Psoas muscle (tissue), 8 donors: ENCODE measurements at regions of chr1 and their contacts with region 1.

Region 1: DNA sequence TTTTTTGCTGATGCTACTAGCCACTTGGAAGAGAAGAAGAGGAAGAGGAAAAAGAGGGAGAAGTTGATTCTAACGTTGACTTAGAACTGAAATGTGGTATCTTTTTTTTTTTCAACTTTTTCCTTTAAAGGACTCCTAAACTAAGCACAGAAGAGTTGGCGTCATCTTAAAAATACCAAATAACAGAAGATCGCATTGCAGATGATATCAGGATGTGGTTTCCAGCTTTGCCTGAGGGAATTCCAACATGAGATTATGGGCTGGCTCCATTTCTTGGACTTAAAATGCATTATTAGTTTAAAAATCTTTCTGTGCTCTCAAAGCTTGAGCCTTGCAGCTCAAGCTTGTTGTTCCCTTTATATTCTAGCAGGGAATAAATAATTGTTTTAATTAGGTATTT is 29.8 kb downstream of the WDR3 start:
- DNase-seq: no peak
- ATAC-seq: no peak
- H3K4me3 ChIP-seq: no peak overlapping the region
- H3K27ac ChIP-seq: no peak overlapping the region
- H3K4me1 ChIP-seq: no peaks in the 10 kb centered on the region
- H3K27me3 ChIP-seq: no peaks in the 10 kb centered on the region
- CTCF ChIP-seq: no peak

Region 2: DNA sequence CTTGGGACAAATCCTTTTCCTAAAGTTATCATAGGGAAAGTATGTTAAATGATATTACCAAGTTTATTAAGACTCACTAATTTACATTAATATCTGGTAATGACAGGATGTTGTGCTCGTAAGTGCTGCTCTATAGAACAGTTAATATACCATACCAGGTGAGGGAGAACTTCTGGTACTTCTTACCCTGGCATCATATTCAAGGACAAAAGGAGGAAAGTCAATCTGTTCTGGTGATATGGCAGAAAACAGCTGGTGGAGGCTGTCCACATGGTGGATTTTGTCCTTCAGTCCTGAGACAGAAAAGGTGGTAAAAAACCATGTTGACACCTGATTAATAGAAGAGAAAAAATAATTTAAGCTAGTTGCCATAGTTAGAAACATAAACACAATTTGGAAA is 81.5 kb before region 1 on chr1:
- intact Hi-C with region 1: loop called in 1 of 2 experiments (anchors 5 kb)
- DNase-seq: no peak
- ATAC-seq: no peak
- H3K4me3 ChIP-seq: no peak overlapping the region
- H3K27ac ChIP-seq: no peak overlapping the region
- H3K4me1 ChIP-seq: no peaks in the 10 kb centered on the region
- H3K27me3 ChIP-seq: no peaks in the 10 kb centered on the region
- CTCF ChIP-seq: no peak

Region 3: DNA sequence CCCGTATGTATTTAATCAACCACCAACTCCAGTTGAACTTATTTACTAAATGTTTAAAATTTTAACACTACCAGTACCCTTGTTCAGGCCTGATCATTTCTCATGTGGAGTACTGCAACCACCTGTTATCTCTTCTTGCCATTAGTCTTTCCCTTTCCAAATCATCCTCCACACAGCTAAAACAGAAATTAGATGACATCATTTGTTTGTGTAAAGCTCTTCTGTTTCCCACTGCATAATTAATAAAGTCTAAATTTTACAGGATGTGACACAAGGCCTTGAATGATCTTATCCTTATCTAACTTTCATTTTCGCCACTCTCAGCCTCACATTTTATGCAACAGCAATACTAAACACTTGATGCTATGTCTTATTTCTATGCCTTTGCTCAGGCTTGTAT is 54.3 kb before region 1 on chr1:
- intact Hi-C with region 1: loop called in 1 of 2 experiments (anchors 10 kb)
- DNase-seq: no peak
- ATAC-seq: no peak
- H3K4me3 ChIP-seq: no peak overlapping the region
- H3K27ac ChIP-seq: no peak overlapping the region
- H3K4me1 ChIP-seq: no peaks in the 10 kb centered on the region
- H3K27me3 ChIP-seq: no peaks in the 10 kb centered on the region
- CTCF ChIP-seq: no peak

Region 4: DNA sequence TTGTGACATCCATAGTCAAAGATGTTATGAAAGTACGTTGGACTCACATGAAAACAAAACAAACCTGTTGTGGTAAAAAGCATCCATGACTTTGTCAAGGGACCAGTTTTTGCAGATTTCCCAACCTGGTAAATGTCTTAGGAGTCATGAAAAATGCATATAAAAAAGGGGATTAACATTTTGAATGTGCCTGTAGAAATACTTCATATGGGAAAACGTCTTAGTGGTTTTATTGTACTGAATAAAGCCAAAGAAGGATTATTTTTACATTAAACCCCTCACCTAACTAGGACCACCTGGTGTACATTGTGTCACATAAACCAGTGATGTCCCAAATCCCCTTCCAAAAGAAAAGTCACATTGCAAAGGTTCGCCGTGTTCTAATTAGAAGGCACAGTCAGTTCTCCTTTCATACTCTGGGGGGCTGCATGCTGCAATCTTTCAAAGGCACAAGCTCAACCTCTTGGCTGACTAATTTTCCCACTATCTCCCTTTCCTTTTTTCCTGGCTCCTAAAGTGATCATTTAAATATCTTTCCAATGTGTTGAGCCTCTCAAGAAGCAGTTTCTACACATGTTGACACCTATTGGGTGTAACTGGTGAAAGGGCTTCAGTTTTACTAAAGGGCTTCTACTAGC is 345.5 kb after region 1 on chr1:
- intact Hi-C with region 1: no loop called
- DNase-seq: no peak
- ATAC-seq: peak; percentile 22 to 58 (median 52)
- H3K4me3 ChIP-seq: no peak overlapping the region
- H3K27ac ChIP-seq: peak overlapping the region; percentile 88
- H3K4me1 ChIP-seq: peaks cover 44% of the 10 kb centered on the region
- H3K27me3 ChIP-seq: no peaks in the 10 kb centered on the region
- CTCF ChIP-seq: peak; percentile 58